Adrenal gland (tissue), 19 donors: ENCODE measurements at regions of chr10 and their contacts with region 1.

Region 1: DNA sequence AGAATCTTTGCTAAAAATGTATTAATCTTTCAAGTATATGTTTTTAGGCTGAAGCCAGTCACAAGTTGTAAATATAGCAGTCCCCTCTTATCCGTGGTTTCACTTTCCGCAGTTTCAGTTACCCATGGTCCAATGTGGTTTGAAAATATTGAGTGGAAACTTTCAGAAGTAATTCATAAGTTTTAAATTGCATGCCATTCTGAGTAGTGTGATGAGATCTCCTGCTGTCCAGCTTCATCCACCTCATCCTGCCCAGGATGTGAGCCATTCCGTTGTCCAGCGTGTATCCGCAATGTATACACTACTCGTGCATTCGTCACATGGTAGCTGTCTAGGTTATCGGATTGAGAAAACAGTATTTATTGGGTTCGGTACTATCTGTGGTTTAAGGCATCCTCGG is 12.2 kb downstream of the PDCD4 start:
- DNase-seq: no peak
- H3K4me3 ChIP-seq: no peak overlapping the region
- H3K27ac ChIP-seq: no peak overlapping the region
- H3K4me1 ChIP-seq: no peaks in the 10 kb centered on the region
- H3K27me3 ChIP-seq: no peaks in the 10 kb centered on the region
- CTCF ChIP-seq: no peak
- POLR2A ChIP-seq: no peak

Region 2: DNA sequence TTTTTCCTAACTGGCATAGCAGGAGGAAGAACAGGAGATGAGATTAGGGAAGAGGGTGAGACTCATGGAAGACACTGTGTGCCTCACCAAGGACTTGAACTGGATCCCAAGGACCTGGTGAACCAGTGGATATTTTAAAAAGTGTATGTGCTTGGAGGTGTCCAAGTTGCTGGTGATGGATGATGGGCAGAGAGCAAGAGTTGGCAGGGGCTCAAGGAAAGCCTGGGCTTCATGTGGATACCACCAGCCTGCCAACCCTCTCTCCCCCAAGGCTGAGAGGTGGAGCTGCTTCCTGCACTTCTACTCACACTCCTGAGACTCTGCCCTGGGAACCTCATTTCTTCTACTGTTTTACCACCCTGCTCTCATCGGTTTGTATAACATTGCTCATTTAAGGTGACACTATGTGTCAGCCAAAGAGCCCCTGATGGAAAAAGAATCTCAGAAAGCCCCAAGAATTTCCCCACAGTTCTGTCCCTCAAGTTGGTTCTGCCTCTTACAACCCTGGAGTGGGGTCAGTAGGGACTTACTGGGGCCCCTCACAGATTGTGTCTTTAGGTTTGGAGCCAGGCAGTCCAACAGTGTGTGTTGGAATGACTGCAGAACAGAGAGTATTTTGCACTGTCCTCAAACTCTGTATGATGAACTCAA is 68.4 kb before region 1 on chr10:
- intact Hi-C with region 1: loop called in 1 of 2 experiments (anchors 10 kb)
- DNase-seq: peak; percentile 53 to 83 (median 75)
- H3K4me3 ChIP-seq: no peak overlapping the region
- H3K27ac ChIP-seq: no peak overlapping the region
- H3K4me1 ChIP-seq: peaks cover 9 to 10% of the 10 kb centered on the region in 2 donors
- H3K27me3 ChIP-seq: no peaks in the 10 kb centered on the region
- CTCF ChIP-seq: no peak
- POLR2A ChIP-seq: no peak

Region 3: GRCh38 chr10:111004016-111004415 is 120.1 kb after region 1 on chr10:
- intact Hi-C with region 1: no loop called
- DNase-seq: no peak
- H3K4me3 ChIP-seq: no peak overlapping the region
- H3K27ac ChIP-seq: no peak overlapping the region
- H3K4me1 ChIP-seq: no peaks in the 10 kb centered on the region
- H3K27me3 ChIP-seq: no peaks in the 10 kb centered on the region
- CTCF ChIP-seq: no peak
- POLR2A ChIP-seq: no peak